ENCODE measurements at regions of chr11 and their contacts with region 1.

Region 1: GRCh38 chr11:122796128-122796717 is 42.1 kb upstream of the CRTAM start:
- DNase-seq: peak; percentile 77
- ATAC-seq: peak; percentile 86
- H3K4me3 Mint-ChIP-seq: no peak overlapping the region
- H3K27ac Mint-ChIP-seq: no peak overlapping the region
- H3K4me1 Mint-ChIP-seq: no peaks in the 10 kb centered on the region
- H3K27me3 Mint-ChIP-seq: no peaks in the 10 kb centered on the region

Region 2: DNA sequence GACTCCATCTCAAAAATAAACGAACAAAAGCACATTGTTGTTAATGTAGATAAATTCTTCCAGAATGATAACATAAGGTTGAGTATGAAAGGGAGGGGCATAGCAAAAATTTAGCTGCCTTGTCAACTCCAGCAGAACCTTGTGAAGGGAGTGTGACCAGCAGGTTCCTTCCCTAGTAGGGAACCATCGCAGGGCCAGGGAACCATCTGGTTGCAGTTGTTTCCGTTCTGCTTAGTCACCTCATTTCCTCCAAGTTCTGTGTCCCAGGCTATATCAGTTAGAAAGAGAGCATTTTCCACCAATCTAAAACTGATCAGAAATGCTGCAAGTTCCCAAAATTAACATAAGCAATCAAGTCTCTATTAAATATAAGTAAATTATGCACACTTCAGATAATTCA is 553.5 kb before region 1 on chr11:
- CTCF ChIA-PET with region 1: no interaction called
- DNase-seq: no peak
- ATAC-seq: no peak
- H3K4me3 Mint-ChIP-seq: no peak overlapping the region
- H3K27ac Mint-ChIP-seq: no peak overlapping the region
- H3K4me1 Mint-ChIP-seq: no peaks in the 10 kb centered on the region
- H3K27me3 Mint-ChIP-seq: no peaks in the 10 kb centered on the region

Region 3: GRCh38 chr11:122578168-122578825 is 217.9 kb before region 1 on chr11:
- CTCF ChIA-PET with region 1: interaction called, 13 read pairs
- DNase-seq: no peak
- ATAC-seq: no peak
- H3K4me3 Mint-ChIP-seq: no peak overlapping the region
- H3K27ac Mint-ChIP-seq: no peak overlapping the region
- H3K4me1 Mint-ChIP-seq: peaks cover 11% of the 10 kb centered on the region
- H3K27me3 Mint-ChIP-seq: peaks cover 7% of the 10 kb centered on the region

Region 4: DNA sequence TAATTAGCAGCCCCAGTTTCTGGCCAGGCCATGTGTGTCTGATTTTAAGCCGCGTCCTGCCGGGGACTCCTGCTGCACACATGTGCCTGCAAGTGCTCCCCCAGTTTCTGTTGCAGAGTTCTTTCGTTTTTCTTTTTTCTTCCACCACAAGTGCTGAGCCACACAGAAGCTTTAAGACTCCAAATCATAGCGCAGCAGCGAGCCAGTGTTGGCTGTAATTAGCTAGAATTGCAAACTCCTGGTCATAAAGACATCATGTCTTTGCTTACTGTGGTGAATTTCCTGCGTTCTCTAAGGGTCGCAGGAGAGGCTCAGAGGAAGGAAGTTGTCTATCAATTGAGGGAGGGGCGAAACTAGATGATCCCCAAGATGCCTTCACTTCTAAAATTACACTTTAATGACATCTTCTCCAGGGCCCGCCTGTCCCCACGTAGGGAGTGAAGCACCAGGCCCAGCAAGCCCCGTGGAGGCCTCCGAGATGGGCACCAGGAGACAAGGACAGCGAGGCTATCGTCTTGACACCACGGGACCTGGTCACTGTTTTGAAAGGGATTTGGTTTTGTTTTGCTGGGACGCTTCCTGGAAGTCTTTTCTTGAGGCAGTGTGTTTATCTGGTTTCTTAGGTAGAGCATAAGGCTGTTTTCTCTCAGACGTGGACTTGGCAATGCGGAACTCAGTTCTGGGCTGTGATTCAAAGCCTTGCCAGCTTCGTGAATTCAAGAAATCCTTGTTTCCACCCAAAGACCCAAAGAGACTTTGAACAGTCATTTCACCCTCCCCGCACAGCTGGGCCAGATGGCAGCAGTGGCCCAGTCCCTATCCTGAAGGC is 68.9 kb before region 1 on chr11:
- CTCF ChIA-PET with region 1: no interaction called
- DNase-seq: peak; percentile 76
- ATAC-seq: peak; percentile 77
- H3K4me3 Mint-ChIP-seq: peak overlapping the region; percentile 65
- H3K27ac Mint-ChIP-seq: peak overlapping the region; percentile 96
- H3K4me1 Mint-ChIP-seq: peaks cover 82% of the 10 kb centered on the region
- H3K27me3 Mint-ChIP-seq: no peaks in the 10 kb centered on the region

Region 5: GRCh38 chr11:122781378-122782195 is 14.6 kb before region 1 on chr11:
- CTCF ChIA-PET with region 1: interaction called, 24 read pairs
- DNase-seq: peak; percentile 82
- ATAC-seq: peak; percentile 87
- H3K4me3 Mint-ChIP-seq: no peak overlapping the region
- H3K27ac Mint-ChIP-seq: no peak overlapping the region
- H3K4me1 Mint-ChIP-seq: peaks cover 20% of the 10 kb centered on the region
- H3K27me3 Mint-ChIP-seq: no peaks in the 10 kb centered on the region

Region 6: DNA sequence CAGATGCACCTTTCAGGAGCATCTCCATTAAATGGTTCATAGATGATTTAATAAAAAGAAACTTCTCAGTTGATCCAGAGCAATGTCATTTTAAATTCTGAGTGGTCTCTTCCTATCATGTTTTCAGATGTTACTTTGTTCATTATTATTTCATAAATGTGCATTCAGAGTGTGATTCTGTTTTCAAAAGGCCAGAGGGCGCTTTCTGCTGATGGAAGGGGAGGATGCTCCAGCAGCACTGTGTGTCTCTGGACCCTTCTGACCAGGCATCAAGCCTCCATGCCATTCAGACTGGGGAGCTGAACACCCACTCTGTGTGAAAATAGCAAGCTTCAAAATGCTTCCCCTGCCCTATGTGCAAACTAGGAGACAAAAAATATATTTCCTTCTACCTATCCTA is 18.2 kb after region 1 on chr11:
- CTCF ChIA-PET with region 1: interaction called, 15 read pairs
- DNase-seq: no peak
- ATAC-seq: peak; percentile 45
- H3K4me3 Mint-ChIP-seq: no peak overlapping the region
- H3K27ac Mint-ChIP-seq: no peak overlapping the region
- H3K4me1 Mint-ChIP-seq: peaks cover 11% of the 10 kb centered on the region
- H3K27me3 Mint-ChIP-seq: no peaks in the 10 kb centered on the region

Region 7: DNA sequence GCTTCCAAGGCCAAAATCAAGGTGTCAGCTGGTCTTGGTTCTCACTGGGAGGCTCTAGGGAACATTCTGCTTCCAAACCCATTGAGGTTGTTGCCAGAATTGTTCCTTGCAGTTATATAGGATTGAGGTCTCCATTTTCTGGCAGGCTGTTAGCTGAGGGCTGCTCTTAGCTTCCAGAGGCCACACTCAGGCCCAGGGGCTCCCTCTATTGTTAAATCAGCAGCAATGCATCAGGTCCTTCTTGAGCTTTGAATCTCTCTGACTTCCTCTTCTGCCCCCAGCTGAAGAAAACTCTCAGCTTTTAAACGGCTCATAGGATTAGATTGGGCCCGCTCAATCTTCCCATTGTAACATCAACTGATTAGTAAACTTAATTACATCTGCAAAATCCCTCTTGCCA is 224.7 kb after region 1 on chr11:
- CTCF ChIA-PET with region 1: interaction called, 16 read pairs
- DNase-seq: peak; percentile 53
- ATAC-seq: peak; percentile 86
- H3K4me3 Mint-ChIP-seq: no peak overlapping the region
- H3K27ac Mint-ChIP-seq: no peak overlapping the region
- H3K4me1 Mint-ChIP-seq: peaks cover 9% of the 10 kb centered on the region
- H3K27me3 Mint-ChIP-seq: peaks cover 9% of the 10 kb centered on the region

Measured in activated CD8-positive, alpha-beta memory T cell treated with anti-CD3 and anti-CD28 coated beads, Interleukin-2, amount 10 ng/mL, durations not matched to agents 7 days and 5 days (primary cell).